Prostate gland (tissue), 2 donors: ENCODE measurements at regions of chr11 and their contacts with region 1.

Region 1: DNA sequence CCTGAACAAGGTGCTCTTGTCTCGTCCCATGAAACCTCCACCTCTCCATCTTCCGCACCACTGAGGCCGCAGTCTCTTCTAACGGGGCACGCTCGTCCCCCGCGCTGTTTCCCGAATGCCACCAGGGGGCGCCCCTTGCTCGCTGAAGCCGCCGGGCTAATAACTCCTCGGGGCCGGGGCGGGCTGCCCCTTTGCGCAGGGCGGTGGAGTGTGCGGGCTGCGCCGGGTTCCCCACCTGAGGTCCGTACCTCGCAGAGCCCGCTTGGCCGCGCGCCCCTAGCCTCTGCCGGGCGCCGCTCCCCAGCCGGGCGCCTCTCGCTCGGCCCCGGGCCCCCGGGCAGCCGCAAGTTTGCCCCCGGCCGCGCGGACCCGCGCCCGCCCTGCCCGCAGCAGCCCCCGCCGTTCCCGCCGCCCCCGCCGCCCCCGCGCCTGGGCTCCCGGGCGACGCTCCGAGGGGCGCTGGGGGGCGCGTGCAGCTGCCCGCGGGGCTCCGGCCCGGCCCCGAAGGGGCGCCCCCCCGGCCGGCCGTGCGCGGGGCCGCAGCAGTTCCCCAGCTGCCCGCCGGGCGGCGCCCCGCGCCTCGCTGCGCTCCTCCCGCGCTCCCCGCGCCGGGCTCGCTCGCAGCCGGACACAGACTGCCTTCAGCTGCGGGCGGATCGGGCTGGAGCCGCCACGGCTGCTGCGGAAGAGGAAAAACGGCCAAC is at the start of gene GRIK4:
- DNase-seq: peak; percentile 80
- H3K4me3 ChIP-seq: peak within 1 kb of the TSS; percentile 34 to 42
- H3K27ac ChIP-seq: no peak within 1 kb of the TSS
- H3K4me1 ChIP-seq: no peaks in the 10 kb centered on the region
- H3K27me3 ChIP-seq: peaks cover 2% of the 10 kb centered on the region
- CTCF ChIP-seq: peak; percentile 91 to 96 (median 94)
- POLR2A ChIP-seq: no peak
- total RNA-seq, gene GRIK4: 0.05 to 1.7 TPM

Region 2: GRCh38 chr11:120682866-120683265 is 171.6 kb after region 1 on chr11:
- intact Hi-C with region 1: loop called (anchors 2 kb)
- DNase-seq: no peak
- H3K4me3 ChIP-seq: no peak overlapping the region
- H3K27ac ChIP-seq: no peak overlapping the region
- H3K4me1 ChIP-seq: no peaks in the 10 kb centered on the region
- H3K27me3 ChIP-seq: no peaks in the 10 kb centered on the region
- CTCF ChIP-seq: no peak
- POLR2A ChIP-seq: no peak

Region 3: DNA sequence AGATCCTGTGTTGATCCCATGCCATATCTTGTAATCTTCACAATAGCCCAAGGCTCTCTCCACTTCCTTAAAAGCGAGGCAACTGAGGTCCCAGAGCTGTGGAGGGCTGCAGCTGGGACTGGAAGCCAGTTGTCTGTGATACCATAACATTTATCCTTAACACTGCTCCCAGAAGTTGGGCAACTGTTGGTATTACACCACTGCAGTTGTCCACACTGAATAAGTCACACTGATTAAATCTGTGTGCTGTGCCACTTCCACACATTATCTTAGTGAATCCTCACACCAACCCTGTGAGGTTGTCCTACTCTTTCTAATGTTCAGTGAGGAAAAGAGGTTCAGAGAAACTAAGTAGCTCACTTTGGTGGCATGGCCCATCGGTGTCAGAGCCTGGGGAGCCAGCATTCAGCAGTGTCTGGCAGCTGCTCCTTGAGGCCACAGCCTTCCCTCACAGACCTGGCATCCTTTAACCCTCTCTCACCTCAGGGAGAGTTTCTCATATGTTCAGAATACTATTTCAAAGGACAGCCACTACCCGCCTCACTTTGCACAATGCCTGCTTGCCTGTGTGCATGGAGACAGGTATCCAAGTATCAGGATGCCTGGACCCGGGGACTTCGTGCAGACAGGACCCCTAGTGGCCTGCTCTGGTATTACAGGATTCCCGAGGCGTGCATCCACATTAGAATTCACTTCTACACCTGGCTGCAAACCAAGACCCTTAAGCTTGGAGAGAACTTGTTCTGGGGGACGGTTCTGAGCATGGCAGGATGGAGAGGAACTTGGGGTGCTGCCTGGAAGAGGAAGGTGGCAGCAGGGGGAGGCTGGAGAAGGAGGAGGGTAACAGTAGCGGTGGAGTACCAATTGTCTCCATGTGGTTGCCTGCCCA is 290.8 kb after region 1 on chr11:
- intact Hi-C with region 1: loop called (anchors 2 kb)
- DNase-seq: peak; percentile 63
- H3K4me3 ChIP-seq: no peak overlapping the region
- H3K27ac ChIP-seq: no peak overlapping the region
- H3K4me1 ChIP-seq: no peaks in the 10 kb centered on the region
- H3K27me3 ChIP-seq: no peaks in the 10 kb centered on the region
- CTCF ChIP-seq: peak; percentile 65 to 90 (median 82)
- POLR2A ChIP-seq: no peak

Region 4: DNA sequence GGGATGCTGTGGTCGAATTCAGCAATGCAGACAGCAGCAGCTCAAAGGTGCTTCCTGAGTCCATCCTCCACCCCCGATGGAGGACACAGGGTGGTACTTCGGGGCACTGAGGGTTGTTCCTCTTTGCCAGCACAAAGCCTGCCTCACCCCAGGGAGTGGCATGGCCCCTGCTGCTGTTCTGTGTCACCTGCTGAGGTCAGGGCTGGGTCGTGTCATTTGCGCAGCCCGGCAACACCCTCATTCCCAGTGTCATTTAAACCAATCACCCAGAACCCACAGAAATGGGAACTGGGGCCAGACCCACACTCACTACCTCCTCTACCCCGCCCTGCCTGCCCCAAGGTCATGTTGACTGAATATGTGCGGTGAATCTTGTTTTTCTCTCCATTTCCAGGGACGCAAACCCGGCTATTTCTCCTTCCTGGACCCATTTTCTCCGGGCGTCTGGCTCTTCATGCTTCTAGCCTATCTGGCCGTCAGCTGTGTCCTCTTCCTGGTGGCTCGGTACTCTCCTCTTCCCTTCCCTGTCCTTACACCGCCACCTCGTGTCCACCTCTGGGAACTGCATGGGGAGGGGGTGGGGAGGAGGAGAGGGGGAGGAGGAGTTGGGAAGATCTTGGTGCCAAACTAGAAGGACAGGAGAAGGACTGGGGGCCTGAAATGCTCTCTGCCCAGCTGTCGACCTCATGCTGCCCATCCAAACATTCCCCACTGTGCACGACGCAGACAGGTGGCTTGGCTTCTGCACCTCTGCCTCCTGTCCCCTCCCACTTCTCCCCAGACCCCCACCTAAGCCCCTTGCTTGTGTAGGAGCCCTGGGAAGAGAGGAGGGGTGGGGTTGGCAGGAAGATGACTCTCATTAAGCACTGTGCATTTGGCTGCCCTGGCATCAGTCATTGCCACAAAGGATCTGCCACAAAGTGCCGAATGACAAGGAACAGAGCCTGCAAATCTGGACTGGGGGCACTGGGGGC is 441.5 kb after region 1 on chr11:
- intact Hi-C with region 1: loop called (anchors 5 kb)
- DNase-seq: peak; percentile 74
- H3K4me3 ChIP-seq: no peak overlapping the region
- H3K27ac ChIP-seq: no peak overlapping the region
- H3K4me1 ChIP-seq: no peaks in the 10 kb centered on the region
- H3K27me3 ChIP-seq: no peaks in the 10 kb centered on the region
- CTCF ChIP-seq: peak; percentile 56 to 88 (median 78)
- POLR2A ChIP-seq: no peak

Region 5: DNA sequence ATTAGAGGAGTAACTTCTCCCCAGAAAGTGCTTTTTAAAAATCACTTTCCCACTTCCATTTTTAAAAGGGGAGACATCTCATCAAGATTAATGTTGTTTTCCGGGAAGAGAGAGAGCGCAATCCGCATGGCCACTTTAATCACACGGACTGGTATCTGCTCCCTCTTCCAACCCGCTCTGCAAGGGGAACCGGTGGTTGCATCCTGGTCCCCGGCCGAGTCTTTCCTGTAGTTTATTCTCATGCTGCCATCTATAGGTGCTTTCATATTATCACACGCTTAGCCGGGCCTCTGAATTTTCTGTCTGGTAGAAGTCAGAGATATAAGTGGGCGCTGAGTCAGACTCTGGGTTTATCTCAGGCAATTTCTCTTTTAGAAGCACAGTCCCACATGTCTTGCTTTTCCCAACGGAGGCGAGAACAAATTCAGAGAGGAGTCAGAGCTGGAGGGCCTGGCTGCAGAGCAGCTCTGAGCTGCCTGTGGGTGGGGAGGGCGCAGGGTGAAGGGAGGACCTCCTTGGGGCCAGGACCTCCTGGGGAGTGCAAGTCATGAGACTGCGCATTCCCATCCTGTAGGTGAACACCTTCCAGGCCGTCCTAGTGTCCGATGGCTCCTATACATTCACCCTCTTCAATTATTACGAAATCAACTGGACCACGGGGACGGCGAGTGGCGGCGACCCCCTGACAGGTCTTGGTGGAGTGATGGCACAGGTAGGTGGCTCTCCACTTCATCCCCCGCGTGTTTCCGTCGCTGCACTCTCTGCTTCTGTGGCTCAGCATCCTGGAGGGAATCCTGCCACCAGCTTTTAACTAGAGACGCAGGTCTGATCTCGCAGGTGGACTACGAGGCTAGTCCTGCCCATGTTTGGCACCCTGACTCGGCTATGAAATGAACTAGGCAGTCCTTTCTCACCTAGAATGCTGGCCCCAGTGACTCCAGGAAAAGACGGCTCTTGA is 601.5 kb after region 1 on chr11:
- intact Hi-C with region 1: loop called (anchors 5 kb)
- DNase-seq: peak; percentile 67
- H3K4me3 ChIP-seq: no peak overlapping the region
- H3K27ac ChIP-seq: no peak overlapping the region
- H3K4me1 ChIP-seq: no peaks in the 10 kb centered on the region
- H3K27me3 ChIP-seq: no peaks in the 10 kb centered on the region
- CTCF ChIP-seq: peak in 3 of 4 experiments; percentile 38 to 69 (median 64)
- POLR2A ChIP-seq: no peak

Region 6: GRCh38 chr11:121194731-121195596 is 683.7 kb after region 1 on chr11:
- intact Hi-C with region 1: loop called (anchors 5 kb)
- DNase-seq: peak; percentile 74
- H3K4me3 ChIP-seq: no peak overlapping the region
- H3K27ac ChIP-seq: no peak overlapping the region
- H3K4me1 ChIP-seq: no peaks in the 10 kb centered on the region
- H3K27me3 ChIP-seq: no peaks in the 10 kb centered on the region
- CTCF ChIP-seq: peak; percentile 55 to 95 (median 82)
- POLR2A ChIP-seq: no peak